Panc1 (cell line): ENCODE measurements at regions of chr15 and their contacts with region 1.

Region 1: GRCh38 chr15:66169023-66169422 is 84.5 kb downstream of the MEGF11 start:
- DNase-seq: no peak
- ATAC-seq: no peak
- H3K4me3 ChIP-seq: no peak overlapping the region
- H3K27ac ChIP-seq: no peak overlapping the region
- H3K4me1 ChIP-seq: no peaks in the 10 kb centered on the region
- H3K27me3 ChIP-seq: no peaks in the 10 kb centered on the region
- CTCF ChIP-seq: no peak

Region 2: DNA sequence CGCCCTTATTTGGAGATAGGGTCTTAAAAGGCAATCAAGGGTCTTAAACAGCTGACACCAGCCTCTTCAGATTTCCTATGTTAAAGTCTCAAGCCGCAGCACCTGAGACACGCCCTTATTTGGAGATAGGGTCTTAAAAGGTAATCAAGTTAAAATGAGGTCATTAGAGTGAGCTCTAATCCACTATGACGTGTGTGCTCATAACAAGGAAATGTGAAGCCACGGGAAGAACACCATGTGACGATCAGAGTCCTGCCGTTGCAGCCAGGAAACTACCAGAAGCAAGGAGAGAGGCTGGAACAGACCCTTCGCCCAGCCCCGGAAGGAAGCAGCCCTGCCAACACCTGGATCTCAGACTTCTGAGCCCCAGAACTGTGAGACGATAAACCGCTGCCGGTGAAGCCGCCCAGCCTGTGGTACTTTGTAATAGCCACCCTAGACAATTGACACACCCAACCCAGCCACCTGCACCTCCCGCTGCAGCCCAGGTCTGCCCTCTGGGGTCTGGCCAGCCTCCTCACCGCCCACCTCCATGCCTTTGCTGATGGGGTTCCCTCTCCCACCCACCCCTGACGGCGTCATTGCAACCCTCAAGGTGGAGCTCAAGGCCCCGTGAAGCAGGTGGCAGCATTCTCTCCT is 53.3 kb before region 1 on chr15:
- CTCF ChIA-PET with region 1: no interaction called
- POLR2A ChIA-PET with region 1: interaction called, 12 read pairs
- in situ Hi-C with region 1: no loop called
- intact Hi-C with region 1: no loop called
- DNase-seq: no peak
- ATAC-seq: no peak
- H3K4me3 ChIP-seq: no peak overlapping the region
- H3K27ac ChIP-seq: no peak overlapping the region
- H3K4me1 ChIP-seq: no peaks in the 10 kb centered on the region
- H3K27me3 ChIP-seq: peaks cover 18% of the 10 kb centered on the region
- CTCF ChIP-seq: no peak